ENCODE measurements at regions of chr17 and their contacts with region 1.

Region 1: DNA sequence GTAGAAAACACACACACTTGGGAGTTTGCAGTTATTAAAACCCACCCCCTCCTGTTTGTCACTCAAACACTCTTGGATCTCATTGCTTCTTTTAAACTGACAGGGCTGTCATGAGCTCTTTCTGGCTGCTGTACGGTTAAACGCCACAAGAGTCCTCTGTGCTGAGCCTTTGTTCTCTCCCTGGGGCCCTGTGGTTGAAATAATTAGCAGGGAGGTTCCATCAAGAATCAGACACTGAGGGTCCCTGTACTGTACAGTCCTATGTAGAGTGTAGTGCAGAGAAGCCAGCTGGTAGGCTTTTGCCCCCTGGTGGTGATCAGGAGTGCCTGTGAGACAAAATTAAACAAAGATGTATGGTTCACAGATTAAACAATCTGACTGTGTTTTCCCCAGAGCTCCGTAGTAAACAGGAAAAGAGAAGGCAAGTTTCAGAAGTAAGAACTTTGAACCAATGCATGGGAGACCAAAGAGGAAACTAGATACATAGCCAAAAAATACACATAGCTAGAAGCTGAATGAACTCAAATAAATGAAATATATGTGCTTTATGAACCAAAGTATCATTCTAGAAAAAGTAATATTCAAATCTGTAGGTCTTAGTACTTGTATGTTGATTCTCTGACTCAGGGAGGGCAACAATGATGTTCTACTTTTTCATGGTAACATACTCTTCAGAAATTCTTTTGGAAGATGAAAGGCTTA is 1.4 kb upstream of the SSH2 start:
- DNase-seq: peak; percentile 53
- ATAC-seq: peak; percentile 74
- H3K4me3 Mint-ChIP-seq: no peak overlapping the region
- H3K27ac Mint-ChIP-seq: no peak overlapping the region
- H3K4me1 Mint-ChIP-seq: peaks cover 12% of the 10 kb centered on the region
- H3K27me3 Mint-ChIP-seq: peaks cover 3% of the 10 kb centered on the region

Region 2: DNA sequence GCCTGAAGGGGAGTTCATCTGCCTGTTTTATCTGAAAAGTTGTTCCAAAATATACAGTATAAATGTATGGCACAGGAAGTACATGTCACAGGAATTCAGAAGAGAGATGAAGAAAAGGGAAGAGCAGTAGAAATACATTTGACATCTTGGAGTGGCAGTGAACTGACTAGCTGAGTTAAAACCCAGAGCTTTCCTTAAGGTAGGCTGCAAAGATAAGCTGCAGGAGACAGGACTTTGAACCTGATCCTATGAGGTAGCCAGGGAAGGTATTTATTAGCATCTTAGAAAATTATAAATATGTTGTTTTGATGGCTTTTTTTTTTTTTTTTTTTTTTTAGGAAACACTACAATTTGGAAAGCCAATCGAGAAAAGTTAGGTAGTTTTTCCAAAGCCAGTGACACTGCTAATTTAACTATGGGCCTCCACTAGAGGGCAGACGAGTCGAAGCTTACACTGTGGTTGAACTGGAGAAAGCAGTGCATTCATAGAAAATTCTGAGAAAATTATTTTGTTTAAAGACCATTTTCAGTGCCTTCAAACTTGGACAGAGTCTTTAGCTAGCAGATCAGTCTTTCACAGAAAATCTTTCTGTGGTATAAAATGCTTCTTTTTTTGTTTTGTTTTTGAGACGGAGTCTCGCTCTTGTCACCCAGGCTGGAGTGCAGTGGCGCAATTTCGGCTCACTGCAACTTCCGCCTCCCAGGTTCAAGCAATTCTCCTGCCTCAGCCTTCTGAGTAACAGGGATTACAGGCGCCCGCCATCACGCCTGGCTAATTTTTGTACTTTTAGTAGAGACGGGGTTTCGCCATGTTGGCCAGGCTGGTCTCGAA is 123.6 kb before region 1 on chr17:
- POLR2A ChIA-PET with region 1: interaction called, 42 read pairs
- DNase-seq: peak; percentile 50
- ATAC-seq: peak; percentile 63
- H3K4me3 Mint-ChIP-seq: no peak overlapping the region
- H3K27ac Mint-ChIP-seq: no peak overlapping the region
- H3K4me1 Mint-ChIP-seq: peaks cover 16% of the 10 kb centered on the region
- H3K27me3 Mint-ChIP-seq: no peaks in the 10 kb centered on the region

Region 3: GRCh38 chr17:29867643-29868181 is 63.7 kb before region 1 on chr17:
- POLR2A ChIA-PET with region 1: interaction called, 10 read pairs
- DNase-seq: no peak
- ATAC-seq: no peak
- H3K4me3 Mint-ChIP-seq: no peak overlapping the region
- H3K27ac Mint-ChIP-seq: no peak overlapping the region
- H3K4me1 Mint-ChIP-seq: peaks cover 5% of the 10 kb centered on the region
- H3K27me3 Mint-ChIP-seq: no peaks in the 10 kb centered on the region